ENCODE measurements at regions of chr1 and their contacts with region 1.

Region 1: DNA sequence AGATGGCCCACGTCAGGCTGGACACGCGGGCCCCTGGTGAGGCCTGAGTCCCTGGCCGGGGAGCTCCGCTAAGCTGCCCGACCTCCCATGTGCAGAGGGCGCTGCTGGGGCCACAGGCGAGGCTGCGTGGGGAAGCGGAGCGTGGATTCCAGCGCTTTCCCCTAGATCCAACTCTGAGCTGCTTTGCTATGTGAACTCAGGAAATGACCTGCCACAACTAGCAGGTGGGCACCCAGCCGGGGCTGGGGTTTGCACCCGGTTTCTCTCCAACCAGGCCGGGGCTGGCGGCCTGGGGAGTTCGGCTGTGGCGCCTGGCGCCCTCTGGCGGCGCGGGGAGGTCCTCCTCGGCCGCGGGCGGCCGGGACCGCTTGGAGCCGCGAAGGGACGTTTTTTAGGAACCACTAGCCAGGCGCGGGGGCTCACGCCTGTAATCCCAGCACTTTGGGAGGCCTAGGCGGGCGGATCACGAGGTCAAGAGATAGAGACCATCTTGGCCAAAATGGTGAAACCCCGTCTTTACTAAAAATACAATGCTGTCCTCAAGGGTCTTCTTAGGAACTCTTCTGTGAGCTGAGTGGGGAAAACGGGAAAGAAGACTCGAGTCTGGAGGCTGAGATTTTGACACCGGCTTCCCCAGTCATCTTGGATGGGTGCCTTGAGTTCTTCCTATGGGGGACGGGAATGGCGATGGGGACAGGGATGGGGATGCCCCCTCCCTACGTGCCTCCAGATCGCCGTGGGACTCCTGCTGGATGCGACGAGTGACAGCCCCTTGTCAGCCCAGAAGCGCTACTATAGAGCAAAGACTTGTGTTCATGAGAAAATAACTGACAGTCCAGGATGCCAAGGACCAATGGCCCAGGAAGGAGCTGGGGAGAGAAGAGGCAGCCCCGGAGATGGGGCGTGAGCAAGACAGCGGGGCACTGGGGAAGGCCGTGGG is 12.6 kb downstream of the PYCR2 start:
- DNase-seq: peak; percentile 61 to 86 (median 80)
- H3K4me3 ChIP-seq: no peak overlapping the region
- H3K27ac ChIP-seq: no peak overlapping the region
- H3K4me1 ChIP-seq: peaks cover 2% of the 10 kb centered on the region
- H3K27me3 ChIP-seq: no peaks in the 10 kb centered on the region
- CTCF ChIP-seq: peak; percentile 83 to 87 (median 85)
- EP300 ChIP-seq: no peak
- POLR2A ChIP-seq: no peak

Region 2: GRCh38 chr1:225554216-225554812 is 357.1 kb before region 1 on chr1:
- intact Hi-C with region 1: loop called in 1 of 4 experiments (anchors 10 kb)
- DNase-seq: no peak
- H3K4me3 ChIP-seq: no peak overlapping the region
- H3K27ac ChIP-seq: no peak overlapping the region
- H3K4me1 ChIP-seq: no peaks in the 10 kb centered on the region
- H3K27me3 ChIP-seq: no peaks in the 10 kb centered on the region
- CTCF ChIP-seq: peak in 2 of 3 donors; percentile 39 to 71
- EP300 ChIP-seq: no peak
- POLR2A ChIP-seq: no peak

Measured in ovary (tissue), 10 donors.